Lower leg skin (tissue), 4 donors: ENCODE measurements at regions of chr22 and their contacts with region 1.

Region 1: DNA sequence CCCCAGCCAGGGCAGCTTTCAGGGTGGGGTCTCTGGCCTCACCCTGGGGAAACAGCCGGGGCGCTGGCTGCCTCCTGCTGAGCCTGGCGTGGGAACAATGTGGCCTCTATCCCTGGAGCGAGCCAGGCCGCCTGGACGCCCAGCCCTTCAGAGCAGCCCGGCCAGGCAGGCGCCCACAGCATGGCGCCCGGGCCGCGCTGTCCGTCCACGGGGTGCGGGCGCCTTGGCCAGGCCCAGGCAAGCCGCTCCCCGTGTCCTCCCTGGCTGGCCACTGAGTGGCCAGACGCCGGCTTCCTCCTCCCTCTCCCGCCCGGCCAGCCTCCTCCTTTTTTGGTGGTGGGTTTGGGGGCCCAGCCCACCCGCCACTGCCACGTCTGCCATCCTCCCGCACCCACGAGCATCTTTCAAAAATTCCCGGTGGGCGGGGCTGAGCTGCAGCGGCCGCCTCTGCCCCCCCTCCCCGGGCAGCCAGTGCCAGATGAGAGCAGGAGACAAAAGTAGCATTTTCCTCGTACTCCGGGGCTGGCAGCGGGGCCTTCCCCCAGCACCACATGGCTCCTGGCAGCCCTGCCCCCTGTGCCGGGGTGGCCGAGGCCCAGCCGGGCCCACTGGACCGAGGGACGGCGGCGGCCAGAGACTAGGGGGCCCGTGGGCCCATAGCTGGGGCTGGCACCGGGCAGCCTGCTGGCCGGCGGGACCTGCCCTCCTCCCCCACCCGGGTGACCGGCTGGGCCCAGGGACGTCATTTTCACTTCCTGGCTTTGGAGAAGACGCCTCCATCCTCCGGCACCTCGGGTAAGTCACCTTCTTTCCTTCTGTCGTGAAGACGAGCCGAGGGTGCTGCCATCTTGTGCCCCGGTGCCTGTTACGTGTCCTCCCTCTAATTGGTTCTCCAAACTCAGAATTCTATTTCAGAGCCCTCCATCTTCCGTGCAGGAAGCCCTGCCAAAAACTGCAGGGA is 70.2 kb upstream of the PPARA start:
- DNase-seq: peak; percentile 76 to 96
- H3K4me3 ChIP-seq: peak overlapping the region; percentile 20
- CTCF ChIP-seq: no peak
- POLR2A ChIP-seq: no peak

Region 2: DNA sequence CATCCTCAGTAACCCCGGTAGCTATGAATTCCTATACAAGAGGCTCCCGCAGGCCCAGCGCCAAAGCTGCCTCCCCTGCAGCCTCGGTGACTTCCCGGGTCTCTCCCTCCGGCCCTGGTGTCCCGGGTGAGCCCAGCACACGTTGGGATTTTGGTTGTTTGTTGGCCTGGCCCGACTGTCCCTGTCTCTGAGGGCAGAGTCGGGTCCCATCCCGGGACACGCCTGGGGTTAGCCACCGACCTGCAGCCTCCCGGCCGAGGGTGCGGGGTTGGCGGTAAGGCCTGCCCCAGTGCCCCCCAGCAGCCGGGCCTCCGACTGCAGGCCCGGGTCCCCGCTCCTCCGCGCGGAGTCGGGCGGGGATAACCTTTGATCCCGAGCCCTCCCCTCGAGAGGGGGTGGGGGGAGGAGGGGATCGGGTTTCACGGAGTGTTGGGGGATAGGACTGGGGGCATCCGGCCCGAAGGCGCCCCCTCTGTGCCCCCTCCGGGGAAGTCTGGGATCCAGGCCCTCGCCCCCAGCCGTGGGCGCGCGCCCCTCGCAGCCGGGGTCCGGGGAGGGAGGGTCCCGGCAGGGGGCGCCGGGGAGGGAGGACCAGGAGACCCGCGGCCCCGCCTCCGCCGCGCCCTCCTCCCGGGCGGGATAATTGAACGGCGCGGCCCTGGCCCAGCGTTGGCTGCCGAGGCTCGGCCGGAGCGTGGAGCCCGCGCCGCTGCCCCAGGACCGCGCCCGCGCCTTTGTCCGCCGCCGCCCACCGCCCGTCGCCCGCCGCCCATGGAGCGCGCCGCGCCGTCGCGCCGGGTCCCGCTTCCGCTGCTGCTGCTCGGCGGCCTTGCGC is 577.7 kb before region 1 on chr22 and contains the start of gene FBLN1:
- intact Hi-C with region 1: no loop called
- DNase-seq: no peak
- H3K4me3 ChIP-seq: peak within 1 kb of the TSS; percentile 52
- CTCF ChIP-seq: no peak
- POLR2A ChIP-seq: no peak
- total RNA-seq, gene FBLN1: 114 to 414 (median 163) TPM

Region 3: GRCh38 chr22:46053563-46054090 is 26.5 kb before region 1 on chr22:
- intact Hi-C with region 1: loop called (anchors 2 kb)
- DNase-seq: peak; percentile 60 to 95
- H3K4me3 ChIP-seq: peak overlapping the region; percentile 61
- CTCF ChIP-seq: no peak
- POLR2A ChIP-seq: no peak